Panc1 (cell line): ENCODE measurements at regions of chr2 and their contacts with region 1.

Region 1: GRCh38 chr2:225920621-225921220 is 521.2 kb downstream of the NYAP2 start:
- DNase-seq: no peak
- ATAC-seq: no peak
- H3K4me3 ChIP-seq: no peak overlapping the region
- H3K27ac ChIP-seq: no peak overlapping the region
- H3K4me1 ChIP-seq: no peaks in the 10 kb centered on the region
- H3K27me3 ChIP-seq: no peaks in the 10 kb centered on the region
- CTCF ChIP-seq: no peak

Region 2: DNA sequence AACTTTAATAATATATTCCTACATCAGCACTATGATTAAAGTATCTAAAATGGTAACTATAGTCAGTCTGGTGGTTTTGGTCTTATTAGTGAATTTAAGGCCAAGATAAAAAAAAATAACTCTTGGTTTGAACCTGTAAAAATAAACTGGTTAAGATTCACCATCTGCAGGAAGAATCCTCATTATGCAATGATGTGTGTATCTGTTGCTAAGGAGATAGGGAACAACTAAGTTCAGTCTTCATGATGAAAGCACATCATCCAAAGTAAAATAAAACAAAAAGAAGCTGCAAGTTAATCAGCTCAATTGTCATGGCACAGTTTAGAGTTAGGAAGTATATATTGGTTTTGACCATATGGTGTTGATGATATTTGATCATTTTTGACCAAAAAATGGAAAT is 55.3 kb before region 1 on chr2:
- CTCF ChIA-PET with region 1: no interaction called
- POLR2A ChIA-PET with region 1: interaction called, 13 read pairs
- in situ Hi-C with region 1: no loop called
- intact Hi-C with region 1: no loop called
- DNase-seq: no peak
- ATAC-seq: no peak
- H3K4me3 ChIP-seq: no peak overlapping the region
- H3K27ac ChIP-seq: no peak overlapping the region
- H3K4me1 ChIP-seq: no peaks in the 10 kb centered on the region
- H3K27me3 ChIP-seq: no peaks in the 10 kb centered on the region
- CTCF ChIP-seq: no peak